Activated CD4-positive, alpha-beta T cell treated with anti-CD3 and anti-CD28 coated beads, Interleukin-2, amount 10 ng/mL, durations not matched to agents 24 days and 14 days (primary cell): ENCODE measurements at regions of chr5 and their contacts with region 1.

Region 1: GRCh38 chr5:134904630-134905245 is at the start of gene PCBD2:
- DNase-seq: peak; percentile 98
- H3K4me3 Mint-ChIP-seq: peak within 1 kb of the TSS; percentile 97
- H3K27ac Mint-ChIP-seq: peak within 1 kb of the TSS; percentile 99
- H3K4me1 Mint-ChIP-seq: peaks cover 14% of the 10 kb centered on the region
- H3K27me3 Mint-ChIP-seq: no peaks in the 10 kb centered on the region
- total RNA-seq, gene PCBD2: 11.0 and 14.1 TPM in 2 replicates

Region 2: GRCh38 chr5:134609232-134609851 is 295.4 kb before region 1 on chr5:
- intact Hi-C with region 1: loop called (anchors 10 kb)
- DNase-seq: peak; percentile 72
- H3K4me3 Mint-ChIP-seq: peak overlapping the region; percentile 76
- H3K27ac Mint-ChIP-seq: peak overlapping the region; percentile 95
- H3K4me1 Mint-ChIP-seq: peaks cover 51% of the 10 kb centered on the region
- H3K27me3 Mint-ChIP-seq: no peaks in the 10 kb centered on the region

Region 3: DNA sequence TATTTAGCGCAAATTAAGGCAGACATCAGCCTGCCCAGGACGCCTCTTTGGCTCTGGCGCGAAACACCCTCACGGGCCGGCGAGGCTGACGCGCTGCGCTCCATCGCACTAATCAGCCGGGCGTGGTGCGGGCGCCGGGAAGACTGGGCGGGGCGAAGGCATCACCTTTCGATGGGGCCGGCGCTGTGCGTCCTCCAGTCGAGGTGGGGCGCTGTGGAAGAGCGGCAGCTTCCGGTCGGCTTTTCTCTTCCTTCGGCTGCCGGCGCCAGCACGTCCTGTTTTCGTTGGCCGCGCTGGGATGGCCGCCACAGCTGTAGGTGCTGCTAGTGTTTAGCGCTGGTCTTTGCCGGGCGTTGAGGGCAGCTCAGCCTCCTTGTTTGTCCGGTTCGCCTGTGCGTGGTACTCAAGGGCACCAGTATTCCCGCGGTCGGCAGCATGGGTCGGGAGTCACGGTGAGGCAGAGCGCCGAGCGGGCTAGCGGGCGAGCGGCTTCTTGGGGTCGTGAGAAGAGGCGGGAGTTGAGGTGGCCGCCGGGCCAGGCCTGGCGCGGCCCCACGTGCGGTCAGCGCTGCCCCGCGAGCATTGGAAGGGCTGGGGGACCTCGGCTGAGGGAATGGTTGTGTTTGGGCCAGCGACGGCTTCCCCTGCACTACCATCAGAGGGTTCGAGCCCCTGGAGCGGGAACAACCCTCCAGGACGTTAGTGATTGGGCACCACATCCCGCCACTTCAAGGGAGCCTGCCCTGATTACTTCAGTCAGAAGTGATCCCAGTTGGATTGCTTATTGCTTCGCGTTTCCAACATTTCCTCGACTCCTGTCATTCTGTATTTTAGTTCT is 146.0 kb before region 1 on chr5 and contains the start of gene DDX46:
- intact Hi-C with region 1: loop called (anchors 1 kb)
- DNase-seq: peak; percentile 99
- H3K4me3 Mint-ChIP-seq: peak within 1 kb of the TSS; percentile 99
- H3K27ac Mint-ChIP-seq: peak within 1 kb of the TSS; percentile 95
- H3K4me1 Mint-ChIP-seq: peaks cover 31% of the 10 kb centered on the region
- H3K27me3 Mint-ChIP-seq: no peaks in the 10 kb centered on the region
- total RNA-seq, gene DDX46: 83.8 and 89.4 TPM in 2 replicates

Region 4: GRCh38 chr5:134845852-134846640 is 58.7 kb before region 1 on chr5 and contains the start of gene C5orf24:
- intact Hi-C with region 1: loop called (anchors 1 kb)
- DNase-seq: peak; percentile 98
- H3K4me3 Mint-ChIP-seq: peak within 1 kb of the TSS; percentile 98
- H3K27ac Mint-ChIP-seq: peak within 1 kb of the TSS; percentile 97
- H3K4me1 Mint-ChIP-seq: peaks cover 21% of the 10 kb centered on the region
- H3K27me3 Mint-ChIP-seq: no peaks in the 10 kb centered on the region
- total RNA-seq, gene C5orf24: 38.7 and 43.9 TPM in 2 replicates

Region 5: GRCh38 chr5:134873987-134874830 is 30.5 kb before region 1 on chr5 and contains the start of gene TXNDC15:
- intact Hi-C with region 1: loop called (anchors 1 kb)
- DNase-seq: peak; percentile 95
- H3K4me3 Mint-ChIP-seq: peak within 1 kb of the TSS; percentile 99
- H3K27ac Mint-ChIP-seq: peak within 1 kb of the TSS; percentile 98
- H3K4me1 Mint-ChIP-seq: peaks cover 30% of the 10 kb centered on the region
- H3K27me3 Mint-ChIP-seq: no peaks in the 10 kb centered on the region
- total RNA-seq, gene TXNDC15: 46.2 and 51.3 TPM in 2 replicates

Region 6: DNA sequence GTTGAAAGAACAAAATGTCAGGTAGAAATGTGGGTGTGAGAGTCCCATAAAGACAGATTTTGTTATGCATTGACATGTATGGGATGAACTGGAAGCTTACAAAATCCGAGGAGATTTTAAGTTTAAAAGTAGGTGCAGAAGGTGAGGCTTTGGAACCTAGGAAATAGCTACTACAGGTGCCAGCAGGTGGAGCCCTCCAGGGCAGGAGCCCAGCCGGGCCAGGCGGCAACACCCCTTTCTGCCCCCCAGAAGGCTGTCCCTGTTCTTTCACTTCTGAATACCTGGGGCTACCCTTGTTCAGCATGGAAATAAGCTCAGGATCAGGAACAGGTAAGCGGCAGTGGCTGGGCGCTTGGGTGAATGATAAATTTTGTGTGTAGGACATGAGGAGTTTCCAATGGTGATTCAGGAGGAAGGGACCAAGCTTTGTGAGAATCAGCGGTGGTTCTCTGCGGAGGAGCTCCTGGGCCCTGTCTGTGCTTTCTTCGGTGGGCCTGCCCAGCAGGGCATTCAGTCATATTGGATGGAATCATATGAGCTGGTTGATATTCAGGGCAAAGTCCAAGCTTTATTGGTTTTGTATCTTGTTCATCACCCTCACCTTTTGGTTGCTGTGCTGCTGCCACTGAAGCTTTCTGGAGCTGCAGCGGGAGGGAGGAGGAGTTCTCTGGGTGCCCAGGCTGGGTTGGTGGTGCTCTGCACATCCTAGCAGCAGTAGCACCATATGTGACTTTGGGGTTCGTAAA is 12.5 kb after region 1 on chr5:
- intact Hi-C with region 1: loop called (anchors 1 kb)
- DNase-seq: no peak
- H3K4me3 Mint-ChIP-seq: no peak overlapping the region
- H3K27ac Mint-ChIP-seq: peak overlapping the region; percentile 31
- H3K4me1 Mint-ChIP-seq: peaks cover 30% of the 10 kb centered on the region
- H3K27me3 Mint-ChIP-seq: no peaks in the 10 kb centered on the region